ENCODE measurements at regions of chr3 and their contacts with region 1.

Region 1: GRCh38 chr3:52001443-52001974 is 5.8 kb upstream of the RPL29 start:
- DNase-seq: peak; percentile 95
- ATAC-seq: peak; percentile 99
- H3K4me3 Mint-ChIP-seq: no peak overlapping the region
- H3K27ac Mint-ChIP-seq: no peak overlapping the region
- H3K4me1 Mint-ChIP-seq: peaks cover 13% of the 10 kb centered on the region
- H3K27me3 Mint-ChIP-seq: no peaks in the 10 kb centered on the region
- CTCF ChIP-seq: peak; percentile 94

Region 2: GRCh38 chr3:51941798-51942602 is 59.5 kb before region 1 on chr3 and contains the starts of genes PARP3 and RRP9:
- CTCF ChIA-PET with region 1: interaction called, 14 read pairs
- POLR2A ChIA-PET with region 1: interaction called, 11 read pairs
- intact Hi-C with region 1: no loop called
- DNase-seq: peak; percentile 100
- ATAC-seq: peak; percentile 93
- H3K4me3 Mint-ChIP-seq: peak within 1 kb of the TSS; percentile 83
- H3K27ac Mint-ChIP-seq: peak within 1 kb of the TSS; percentile 90
- H3K4me1 Mint-ChIP-seq: peaks cover 28% of the 10 kb centered on the region
- H3K27me3 Mint-ChIP-seq: no peaks in the 10 kb centered on the region
- CTCF ChIP-seq: peak; percentile 93
- total RNA-seq, gene PARP3: 11.5 to 12.7 TPM
- total RNA-seq, gene RRP9: 40.0 to 40.7 TPM

Region 3: GRCh38 chr3:51974963-51975851 is 26.3 kb before region 1 on chr3 and contains the start of gene ABHD14A:
- CTCF ChIA-PET with region 1: interaction called, 10 read pairs
- POLR2A ChIA-PET with region 1: interaction called, 267 read pairs
- intact Hi-C with region 1: no loop called
- DNase-seq: peak; percentile 67
- ATAC-seq: peak; percentile 77
- H3K4me3 Mint-ChIP-seq: peak within 1 kb of the TSS; percentile 77
- H3K27ac Mint-ChIP-seq: peak within 1 kb of the TSS; percentile 97
- H3K4me1 Mint-ChIP-seq: peaks cover 31% of the 10 kb centered on the region
- H3K27me3 Mint-ChIP-seq: no peaks in the 10 kb centered on the region
- CTCF ChIP-seq: no peak
- total RNA-seq, gene ABHD14A: 8.9 to 9.5 TPM

Region 4: GRCh38 chr3:52086921-52087663 is 85.6 kb after region 1 on chr3:
- CTCF ChIA-PET with region 1: interaction called, 10 read pairs
- POLR2A ChIA-PET with region 1: no interaction called
- intact Hi-C with region 1: no loop called
- DNase-seq: peak; percentile 19
- ATAC-seq: no peak
- H3K4me3 Mint-ChIP-seq: no peak overlapping the region
- H3K27ac Mint-ChIP-seq: peak overlapping the region; percentile 75
- H3K4me1 Mint-ChIP-seq: peaks cover 28% of the 10 kb centered on the region
- H3K27me3 Mint-ChIP-seq: no peaks in the 10 kb centered on the region
- CTCF ChIP-seq: no peak

Region 5: DNA sequence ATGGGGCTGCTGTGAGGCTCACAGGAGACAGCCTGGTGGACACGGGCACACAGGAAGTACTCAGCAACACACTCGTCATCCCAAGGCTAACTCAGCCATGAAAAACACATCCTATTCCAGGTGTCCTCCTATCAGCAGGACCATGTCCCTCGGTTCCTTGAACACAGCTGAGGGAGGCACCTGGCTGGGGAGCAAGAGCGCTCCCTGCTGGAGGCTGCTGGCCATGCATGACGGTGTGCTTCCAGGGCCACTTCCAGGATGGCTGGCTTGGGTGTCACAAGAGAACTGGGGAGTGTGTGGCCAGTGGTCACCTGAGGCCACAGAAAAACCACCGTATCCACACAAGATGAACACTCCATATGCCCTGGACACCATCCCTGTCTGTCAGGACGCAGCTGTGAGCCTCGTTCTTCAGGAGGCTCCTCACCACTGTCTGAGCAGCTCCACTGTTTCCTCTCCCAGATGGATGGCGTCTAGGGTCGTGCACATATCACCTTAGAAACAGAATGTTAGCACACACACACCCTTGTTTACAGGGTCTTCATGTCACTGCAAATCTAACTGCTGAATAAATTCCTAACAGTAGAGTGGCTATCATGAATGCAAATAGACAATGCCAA is 121.7 kb after region 1 on chr3:
- CTCF ChIA-PET with region 1: interaction called, 92 read pairs
- POLR2A ChIA-PET with region 1: no interaction called
- intact Hi-C with region 1: loop called (anchors 2 kb)
- DNase-seq: peak; percentile 79
- ATAC-seq: peak; percentile 94
- H3K4me3 Mint-ChIP-seq: no peak overlapping the region
- H3K27ac Mint-ChIP-seq: no peak overlapping the region
- H3K4me1 Mint-ChIP-seq: peaks cover 6% of the 10 kb centered on the region
- H3K27me3 Mint-ChIP-seq: no peaks in the 10 kb centered on the region
- CTCF ChIP-seq: peak; percentile 96

Region 6: GRCh38 chr3:52144034-52144795 is 142.7 kb after region 1 on chr3:
- CTCF ChIA-PET with region 1: interaction called, 83 read pairs
- POLR2A ChIA-PET with region 1: interaction called, 3 read pairs
- intact Hi-C with region 1: loop called (anchors 1 kb)
- DNase-seq: peak; percentile 93
- ATAC-seq: peak; percentile 100
- H3K4me3 Mint-ChIP-seq: no peak overlapping the region
- H3K27ac Mint-ChIP-seq: no peak overlapping the region
- H3K4me1 Mint-ChIP-seq: peaks cover 7% of the 10 kb centered on the region
- H3K27me3 Mint-ChIP-seq: no peaks in the 10 kb centered on the region
- CTCF ChIP-seq: peak; percentile 88

Region 7: GRCh38 chr3:52154117-52155094 is 152.9 kb after region 1 on chr3 and contains the start of gene POC1A:
- CTCF ChIA-PET with region 1: interaction called, 83 read pairs
- POLR2A ChIA-PET with region 1: interaction called, 3 read pairs
- intact Hi-C with region 1: no loop called
- DNase-seq: peak; percentile 96
- ATAC-seq: peak; percentile 91
- H3K4me3 Mint-ChIP-seq: peak within 1 kb of the TSS; percentile 87
- H3K27ac Mint-ChIP-seq: peak within 1 kb of the TSS; percentile 95
- H3K4me1 Mint-ChIP-seq: peaks cover 20% of the 10 kb centered on the region
- H3K27me3 Mint-ChIP-seq: no peaks in the 10 kb centered on the region
- CTCF ChIP-seq: no peak
- total RNA-seq, gene POC1A: 21.2 to 23.5 TPM

Region 8: GRCh38 chr3:53089511-53089910 is 1088.0 kb after region 1 on chr3:
- CTCF ChIA-PET with region 1: no interaction called
- POLR2A ChIA-PET with region 1: no interaction called
- intact Hi-C with region 1: no loop called
- DNase-seq: no peak
- ATAC-seq: no peak
- H3K4me3 Mint-ChIP-seq: no peak overlapping the region
- H3K27ac Mint-ChIP-seq: no peak overlapping the region
- H3K4me1 Mint-ChIP-seq: no peaks in the 10 kb centered on the region
- H3K27me3 Mint-ChIP-seq: no peaks in the 10 kb centered on the region
- CTCF ChIP-seq: no peak

Measured in activated CD8-positive, alpha-beta T cell treated with anti-CD3 and anti-CD28 coated beads for 36 hours (primary cell).